Naive thymus-derived CD4-positive, alpha-beta T cell (primary cell): ENCODE measurements at regions of chr16 and their contacts with region 1.

Region 1: DNA sequence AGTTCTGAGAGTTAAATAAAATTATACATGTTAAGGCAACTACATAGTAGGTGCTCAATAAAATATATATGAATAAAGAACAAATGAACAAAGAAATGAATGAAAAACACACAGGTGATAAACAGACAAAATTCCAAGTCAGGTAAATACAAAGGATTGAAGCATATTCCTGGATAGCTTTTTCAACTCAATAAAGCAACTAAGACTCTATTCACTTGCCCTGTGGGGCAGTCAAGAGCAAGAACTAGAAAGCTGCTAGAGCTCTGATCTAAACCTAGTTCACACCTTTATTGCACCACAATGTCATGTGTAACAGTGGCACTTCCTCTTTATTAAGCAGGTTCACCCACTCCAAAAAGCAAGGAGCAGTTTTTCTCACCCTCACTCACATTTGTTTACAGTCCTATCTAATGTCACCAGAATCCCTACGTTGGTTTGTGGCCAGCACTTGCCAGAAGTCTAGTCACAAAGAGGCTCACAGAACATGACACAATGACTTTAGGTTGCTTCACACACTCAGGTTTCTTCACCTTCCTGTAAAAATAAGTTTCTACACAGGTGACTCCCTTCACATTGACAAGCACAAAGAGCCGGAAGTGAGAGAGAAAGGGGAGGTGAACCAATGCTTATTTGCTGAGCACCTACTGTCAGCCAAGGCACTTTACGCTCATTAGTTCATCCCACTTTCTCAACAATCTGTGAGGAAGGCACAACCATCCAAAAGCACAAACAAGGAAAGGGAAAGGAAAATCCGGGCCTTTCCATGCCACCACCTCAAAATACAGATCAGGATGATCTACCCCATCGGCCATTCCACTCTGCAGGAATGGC is 70.8 kb downstream of the XPO6 start:
- DNase-seq: peak; percentile 15 to 96 (median 90)
- ATAC-seq: peak; percentile 84
- H3K4me3 ChIP-seq: peak overlapping the region; percentile 58
- H3K4me3 Mint-ChIP-seq: peak overlapping the region; percentile 75 to 93 (median 86)
- H3K27ac ChIP-seq: peak overlapping the region; percentile 77
- H3K27ac Mint-ChIP-seq: peak overlapping the region; percentile 95 to 99 (median 99)
- H3K4me1 ChIP-seq: peaks cover 87 to 91% of the 10 kb centered on the region in 2 donors
- H3K4me1 Mint-ChIP-seq: peaks cover 67 to 94% (median 87%) of the 10 kb centered on the region in 7 donors
- H3K27me3 ChIP-seq: no peaks in the 10 kb centered on the region
- H3K27me3 Mint-ChIP-seq: no peaks in the 10 kb centered on the region

Region 2: DNA sequence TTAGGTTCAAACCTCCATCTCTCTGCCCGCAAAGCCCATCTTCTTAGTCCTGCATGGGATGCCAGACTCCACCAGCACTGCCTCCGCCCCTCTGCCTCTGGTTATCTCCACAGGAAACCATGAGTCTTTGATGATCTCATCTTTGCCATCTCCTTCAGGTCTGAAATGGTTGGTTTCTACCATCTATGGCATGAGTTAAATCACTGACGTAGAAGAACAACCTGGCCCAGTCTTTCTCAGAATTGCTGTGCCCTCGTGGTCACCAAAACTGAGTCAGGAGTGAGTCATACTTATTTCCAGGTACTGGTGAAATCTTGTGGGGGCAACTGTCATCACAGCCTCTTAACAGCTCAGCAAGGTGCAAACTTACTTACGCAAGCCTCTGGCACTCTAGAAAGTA is 1542.9 kb before region 1 on chr16:
- CTCF ChIA-PET with region 1: no interaction called
- POLR2A ChIA-PET with region 1: no interaction called
- intact Hi-C with region 1: loop called in 1 of 2 experiments (anchors 5 kb)
- DNase-seq: peak in 7 of 9 donors; percentile 7 to 72 (median 24)
- ATAC-seq: peak; percentile 86
- H3K4me3 ChIP-seq: no peak overlapping the region
- H3K4me3 Mint-ChIP-seq: peak overlapping the region in 1 of 10 donors; percentile 74
- H3K27ac ChIP-seq: no peak overlapping the region
- H3K27ac Mint-ChIP-seq: peak overlapping the region in 3 of 9 donors; percentile 15 to 96 (median 69)
- H3K4me1 ChIP-seq: peaks cover 0 to 20% of the 10 kb centered on the region in 2 donors
- H3K4me1 Mint-ChIP-seq: peaks cover 4 to 75% (median 9%) of the 10 kb centered on the region in 7 donors
- H3K27me3 ChIP-seq: no peaks in the 10 kb centered on the region
- H3K27me3 Mint-ChIP-seq: peaks cover 0 to 19% (median 0%) of the 10 kb centered on the region in 5 donors

Region 3: GRCh38 chr16:28063641-28064061 is 77.4 kb before region 1 on chr16 and contains the start of gene GSG1L:
- CTCF ChIA-PET with region 1: no interaction called
- POLR2A ChIA-PET with region 1: no interaction called
- intact Hi-C with region 1: no loop called
- DNase-seq: no peak
- ATAC-seq: peak; percentile 56
- H3K4me3 ChIP-seq: no peak within 1 kb of the TSS
- H3K4me3 Mint-ChIP-seq: peak within 1 kb of the TSS in 4 of 10 donors; percentile 9 to 58 (median 19)
- H3K27ac ChIP-seq: no peak within 1 kb of the TSS
- H3K27ac Mint-ChIP-seq: no peak within 1 kb of the TSS
- H3K4me1 ChIP-seq: no peaks in the 10 kb centered on the region
- H3K4me1 Mint-ChIP-seq: peaks cover 0 to 10% (median 2%) of the 10 kb centered on the region in 7 donors
- H3K27me3 ChIP-seq: peaks cover 0 to 4% of the 10 kb centered on the region in 2 donors
- H3K27me3 Mint-ChIP-seq: peaks cover 36 to 69% (median 45%) of the 10 kb centered on the region in 5 donors
- total RNA-seq, gene GSG1L: 0.10 TPM in 1 of 5 experiments, not detected in the others

Region 4: GRCh38 chr16:28164140-28164539 is 23.1 kb after region 1 on chr16:
- CTCF ChIA-PET with region 1: interaction called, 4 read pairs
- POLR2A ChIA-PET with region 1: interaction called, 17 read pairs
- intact Hi-C with region 1: loop called (anchors 1 kb)
- DNase-seq: no peak
- ATAC-seq: no peak
- H3K4me3 ChIP-seq: no peak overlapping the region
- H3K4me3 Mint-ChIP-seq: peak overlapping the region in 4 of 10 donors; percentile 9 to 69 (median 42)
- H3K27ac ChIP-seq: no peak overlapping the region
- H3K27ac Mint-ChIP-seq: peak overlapping the region in 8 of 9 donors; percentile 43 to 95 (median 82)
- H3K4me1 ChIP-seq: peaks cover 13 to 66% of the 10 kb centered on the region in 2 donors
- H3K4me1 Mint-ChIP-seq: peaks cover 62 to 96% (median 86%) of the 10 kb centered on the region in 7 donors
- H3K27me3 ChIP-seq: no peaks in the 10 kb centered on the region
- H3K27me3 Mint-ChIP-seq: no peaks in the 10 kb centered on the region

Region 5: DNA sequence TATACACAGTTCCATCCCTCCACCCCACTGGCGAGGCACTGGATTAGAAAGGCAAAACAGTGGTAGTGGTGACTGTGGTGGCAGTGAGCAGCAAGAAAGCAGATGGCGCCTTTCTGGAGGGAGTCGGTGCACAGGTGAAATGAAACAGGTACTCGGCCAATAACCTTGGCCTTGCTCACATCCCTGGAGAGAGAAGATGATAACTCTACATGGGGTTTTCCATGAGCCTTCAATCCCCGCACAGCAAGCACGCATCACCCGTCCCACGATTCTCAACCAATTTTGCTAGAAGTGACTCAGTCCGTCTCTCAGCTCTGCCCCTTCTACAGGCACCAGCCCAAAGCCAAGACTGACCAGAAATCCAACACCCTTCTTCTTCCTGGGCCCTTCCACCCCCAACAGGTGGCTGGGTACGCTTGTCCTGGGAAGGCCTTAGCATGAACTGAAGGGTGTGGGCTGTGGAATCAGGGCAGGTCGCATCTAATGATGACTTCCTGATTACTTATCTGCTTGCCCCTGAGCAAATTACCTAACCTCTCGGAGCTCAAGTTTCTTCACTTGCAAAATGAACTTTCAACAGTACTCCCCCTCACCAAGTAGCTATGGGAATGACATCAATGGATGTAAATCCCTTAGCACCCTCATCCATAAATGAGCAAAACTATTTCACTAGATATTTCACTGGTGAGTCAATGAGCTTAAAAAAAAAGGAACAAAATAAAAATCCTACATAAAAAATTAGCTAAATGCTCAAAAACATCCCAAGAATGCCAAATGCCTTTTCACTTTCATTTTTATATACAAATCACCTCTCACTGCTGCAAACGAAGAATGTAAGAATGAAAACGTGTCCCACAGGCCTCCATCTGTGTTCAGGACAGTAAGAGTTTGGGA is 52.8 kb after region 1 on chr16:
- CTCF ChIA-PET with region 1: interaction called, 5 read pairs
- POLR2A ChIA-PET with region 1: interaction called, 25 read pairs
- intact Hi-C with region 1: loop called (anchors 1 kb)
- DNase-seq: peak in 2 of 9 donors; percentile 45 to 55
- ATAC-seq: peak; percentile 24
- H3K4me3 ChIP-seq: peak overlapping the region; percentile 39
- H3K4me3 Mint-ChIP-seq: peak overlapping the region; percentile 73 to 87 (median 86)
- H3K27ac ChIP-seq: peak overlapping the region; percentile 77
- H3K27ac Mint-ChIP-seq: peak overlapping the region; percentile 86 to 99 (median 95)
- H3K4me1 ChIP-seq: peaks cover 43 to 75% of the 10 kb centered on the region in 2 donors
- H3K4me1 Mint-ChIP-seq: peaks cover 65 to 94% (median 84%) of the 10 kb centered on the region in 7 donors
- H3K27me3 ChIP-seq: no peaks in the 10 kb centered on the region
- H3K27me3 Mint-ChIP-seq: no peaks in the 10 kb centered on the region

Region 6: DNA sequence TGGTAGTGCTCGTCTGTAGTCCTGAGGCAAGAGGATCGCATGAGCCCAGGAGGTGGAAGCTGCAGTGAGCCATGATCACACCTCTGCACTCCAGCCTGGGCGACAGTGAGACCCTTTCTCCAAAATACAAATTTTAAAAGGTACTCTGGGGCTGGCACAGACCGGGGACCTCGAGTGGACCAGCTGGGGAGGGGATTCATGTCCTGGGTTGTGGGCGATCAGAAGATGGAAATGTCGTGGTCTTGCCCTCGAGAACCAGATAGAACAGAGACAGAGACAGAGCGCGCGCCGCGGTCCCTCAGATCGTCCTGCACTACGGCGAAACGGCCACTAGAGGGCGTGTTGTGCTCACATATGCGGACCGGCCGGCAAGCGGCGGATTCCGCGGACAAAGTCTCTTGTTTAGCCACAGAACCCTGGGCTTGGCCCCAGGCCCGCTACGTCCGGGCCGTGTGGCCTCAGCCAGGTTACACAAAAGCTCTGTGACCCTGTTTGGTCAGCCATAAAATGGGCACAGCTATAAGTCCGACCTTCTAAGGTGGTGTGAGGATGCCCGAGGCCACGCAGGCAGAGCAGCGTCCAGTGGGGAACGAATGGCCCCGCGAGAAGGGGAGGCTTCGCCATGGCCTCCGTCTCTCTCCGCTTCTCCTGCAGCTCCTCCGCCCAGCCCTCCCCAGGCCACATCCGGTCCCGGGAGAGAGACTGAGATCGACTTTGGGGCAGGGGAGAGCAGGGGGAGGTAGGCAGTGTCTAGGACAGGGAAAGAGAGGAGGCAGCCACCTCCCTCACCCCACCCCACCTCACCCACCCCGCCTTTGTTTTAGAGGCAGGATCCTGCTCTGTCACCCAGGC is 136.8 kb after region 1 on chr16:
- CTCF ChIA-PET with region 1: interaction called, 15 read pairs
- POLR2A ChIA-PET with region 1: interaction called, 7 read pairs
- intact Hi-C with region 1: loop called (anchors 1 to 5 kb)
- DNase-seq: peak; percentile 70 to 88 (median 82)
- ATAC-seq: peak; percentile 95
- H3K4me3 ChIP-seq: peak overlapping the region; percentile 82
- H3K4me3 Mint-ChIP-seq: peak overlapping the region; percentile 75 to 86 (median 84)
- H3K27ac ChIP-seq: peak overlapping the region; percentile 73
- H3K27ac Mint-ChIP-seq: peak overlapping the region; percentile 88 to 99 (median 94)
- H3K4me1 ChIP-seq: peaks cover 21 to 30% of the 10 kb centered on the region in 2 donors
- H3K4me1 Mint-ChIP-seq: peaks cover 31 to 61% (median 44%) of the 10 kb centered on the region in 7 donors
- H3K27me3 ChIP-seq: no peaks in the 10 kb centered on the region
- H3K27me3 Mint-ChIP-seq: peaks cover 0 to 30% (median 0%) of the 10 kb centered on the region in 5 donors

Region 7: DNA sequence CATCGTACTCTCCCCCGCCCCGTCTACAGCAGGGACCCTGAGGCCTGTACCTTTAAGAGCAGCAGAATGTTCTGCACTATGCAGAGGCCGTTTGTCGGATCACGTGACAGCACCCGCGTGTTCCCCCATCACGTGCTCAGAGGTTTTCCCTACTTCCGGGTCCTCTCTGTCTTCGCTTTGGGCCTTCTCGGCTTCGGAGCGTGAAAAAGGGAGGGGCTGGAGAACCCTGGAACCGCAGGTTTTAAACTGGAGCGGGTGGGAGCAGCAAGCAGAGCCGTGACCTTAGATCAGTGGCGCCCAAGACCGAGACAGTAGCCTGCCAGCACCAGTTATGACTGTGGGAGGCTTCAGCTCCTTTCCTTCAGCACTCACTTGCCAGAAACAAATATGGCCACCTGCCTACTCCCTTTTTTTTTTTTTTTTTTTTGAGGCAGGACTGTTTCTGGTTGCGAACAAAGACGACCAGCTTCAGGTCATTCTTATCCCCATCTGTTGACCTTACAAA is 351.0 kb after region 1 on chr16 and contains the start of gene CLN3:
- CTCF ChIA-PET with region 1: no interaction called
- POLR2A ChIA-PET with region 1: interaction called, 4 read pairs
- intact Hi-C with region 1: loop called in 1 of 2 experiments (anchors 10 kb)
- DNase-seq: peak; percentile 73 to 95 (median 93)
- ATAC-seq: peak; percentile 78
- H3K4me3 ChIP-seq: peak within 1 kb of the TSS; percentile 98
- H3K4me3 Mint-ChIP-seq: peak within 1 kb of the TSS; percentile 95 to 100 (median 98)
- H3K27ac ChIP-seq: peak within 1 kb of the TSS; percentile 95
- H3K27ac Mint-ChIP-seq: peak within 1 kb of the TSS; percentile 99 to 100 (median 100)
- H3K4me1 ChIP-seq: peaks cover 31 to 40% of the 10 kb centered on the region in 2 donors
- H3K4me1 Mint-ChIP-seq: peaks cover 41 to 77% (median 62%) of the 10 kb centered on the region in 7 donors
- H3K27me3 ChIP-seq: no peaks in the 10 kb centered on the region
- H3K27me3 Mint-ChIP-seq: no peaks in the 10 kb centered on the region
- total RNA-seq, gene CLN3: 56.5 to 76.3 (median 70.7) TPM